Psoas muscle (tissue), 8 donors: ENCODE measurements at regions of chr21 and their contacts with region 1.

Region 1: GRCh38 chr21:31629972-31630711 is 29.4 kb upstream of the SOD1 start:
- DNase-seq: no peak
- ATAC-seq: no peak
- H3K4me3 ChIP-seq: no peak overlapping the region
- H3K27ac ChIP-seq: no peak overlapping the region
- H3K4me1 ChIP-seq: no peaks in the 10 kb centered on the region
- H3K27me3 ChIP-seq: no peaks in the 10 kb centered on the region
- CTCF ChIP-seq: no peak

Region 2: GRCh38 chr21:31580866-31581276 is 49.3 kb before region 1 on chr21:
- intact Hi-C with region 1: no loop called
- DNase-seq: peak; percentile 59 to 64
- ATAC-seq: peak in 3 of 4 donors; percentile 38 to 54 (median 53)
- H3K4me3 ChIP-seq: no peak overlapping the region
- H3K27ac ChIP-seq: no peak overlapping the region
- H3K4me1 ChIP-seq: no peaks in the 10 kb centered on the region
- H3K27me3 ChIP-seq: no peaks in the 10 kb centered on the region
- CTCF ChIP-seq: peak; percentile 53

Region 3: GRCh38 chr21:32520875-32521735 is 891.0 kb after region 1 on chr21:
- intact Hi-C with region 1: loop called in 1 of 2 experiments (anchors 10 kb)
- DNase-seq: peak; percentile 88 to 91
- ATAC-seq: peak; percentile 38 to 72 (median 57)
- H3K4me3 ChIP-seq: no peak overlapping the region
- H3K27ac ChIP-seq: peak overlapping the region; percentile 68
- H3K4me1 ChIP-seq: peaks cover 17% of the 10 kb centered on the region
- H3K27me3 ChIP-seq: no peaks in the 10 kb centered on the region
- CTCF ChIP-seq: no peak